ENCODE measurements at regions of chr14 and their contacts with region 1.

Region 1: GRCh38 chr14:91482263-91483013 is 27.7 kb downstream of the PPP4R3A start:
- DNase-seq: no peak
- ATAC-seq: peak; percentile 12
- H3K4me3 ChIP-seq: no peak overlapping the region
- H3K4me3 Mint-ChIP-seq: peak overlapping the region in 1 of 10 donors; percentile 8
- H3K27ac ChIP-seq: peak overlapping the region; percentile 14
- H3K27ac Mint-ChIP-seq: peak overlapping the region in 7 of 9 donors; percentile 34 to 76 (median 45)
- H3K4me1 ChIP-seq: peaks cover 4 to 10% of the 10 kb centered on the region in 2 donors
- H3K4me1 Mint-ChIP-seq: peaks cover 34 to 87% (median 82%) of the 10 kb centered on the region in 7 donors
- H3K27me3 ChIP-seq: no peaks in the 10 kb centered on the region
- H3K27me3 Mint-ChIP-seq: no peaks in the 10 kb centered on the region

Region 2: GRCh38 chr14:91470216-91470615 is 12.2 kb before region 1 on chr14:
- CTCF ChIA-PET with region 1: interaction called, 3 read pairs
- POLR2A ChIA-PET with region 1: no interaction called
- intact Hi-C with region 1: loop called in 1 of 2 experiments (anchors 2 kb)
- DNase-seq: no peak
- ATAC-seq: no peak
- H3K4me3 ChIP-seq: no peak overlapping the region
- H3K4me3 Mint-ChIP-seq: no peak overlapping the region
- H3K27ac ChIP-seq: peak overlapping the region; percentile 24
- H3K27ac Mint-ChIP-seq: peak overlapping the region in 4 of 9 donors; percentile 34 to 76 (median 56)
- H3K4me1 ChIP-seq: no peaks in the 10 kb centered on the region
- H3K4me1 Mint-ChIP-seq: peaks cover 2 to 29% (median 20%) of the 10 kb centered on the region in 7 donors
- H3K27me3 ChIP-seq: no peaks in the 10 kb centered on the region
- H3K27me3 Mint-ChIP-seq: no peaks in the 10 kb centered on the region

Region 3: GRCh38 chr14:91780452-91780851 is 298.0 kb after region 1 on chr14:
- CTCF ChIA-PET with region 1: no interaction called
- POLR2A ChIA-PET with region 1: no interaction called
- intact Hi-C with region 1: loop called in 1 of 2 experiments (anchors 10 kb)
- DNase-seq: no peak
- ATAC-seq: no peak
- H3K4me3 ChIP-seq: no peak overlapping the region
- H3K4me3 Mint-ChIP-seq: no peak overlapping the region
- H3K27ac ChIP-seq: no peak overlapping the region
- H3K27ac Mint-ChIP-seq: peak overlapping the region in 1 of 9 donors; percentile 27
- H3K4me1 ChIP-seq: no peaks in the 10 kb centered on the region
- H3K4me1 Mint-ChIP-seq: peaks cover 4 to 22% (median 10%) of the 10 kb centered on the region in 7 donors
- H3K27me3 ChIP-seq: no peaks in the 10 kb centered on the region
- H3K27me3 Mint-ChIP-seq: no peaks in the 10 kb centered on the region

Region 4: DNA sequence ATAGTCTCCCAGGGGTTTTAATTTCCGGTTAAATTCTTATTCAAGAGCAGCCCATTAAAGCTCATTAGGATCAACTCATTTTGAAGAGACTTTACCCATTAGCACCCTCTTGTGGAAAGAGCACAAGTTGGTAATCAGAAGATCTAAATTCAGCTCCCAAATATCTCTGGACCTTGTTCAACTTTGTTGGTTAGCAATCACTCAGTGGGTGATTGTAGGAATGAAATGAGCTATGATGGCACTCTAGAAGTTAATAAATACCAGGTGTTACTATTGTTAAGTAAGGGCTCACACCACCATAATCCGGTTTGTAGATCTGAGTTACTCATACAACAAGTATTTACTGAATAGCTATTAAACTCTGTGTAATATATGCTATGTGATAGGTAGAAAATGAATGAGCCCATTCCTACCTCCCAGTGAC is 514.5 kb after region 1 on chr14:
- CTCF ChIA-PET with region 1: no interaction called
- POLR2A ChIA-PET with region 1: no interaction called
- intact Hi-C with region 1: loop called in 1 of 2 experiments (anchors 10 kb)
- DNase-seq: peak in 7 of 9 donors; percentile 12 to 58 (median 44)
- ATAC-seq: peak; percentile 66
- H3K4me3 ChIP-seq: no peak overlapping the region
- H3K4me3 Mint-ChIP-seq: peak overlapping the region in 3 of 10 donors; percentile 37 to 70 (median 48)
- H3K27ac ChIP-seq: no peak overlapping the region
- H3K27ac Mint-ChIP-seq: peak overlapping the region in 5 of 9 donors; percentile 15 to 70 (median 65)
- H3K4me1 ChIP-seq: peaks cover 10 to 27% of the 10 kb centered on the region in 2 donors
- H3K4me1 Mint-ChIP-seq: peaks cover 27 to 54% (median 41%) of the 10 kb centered on the region in 7 donors
- H3K27me3 ChIP-seq: no peaks in the 10 kb centered on the region
- H3K27me3 Mint-ChIP-seq: no peaks in the 10 kb centered on the region

Measured in naive thymus-derived CD4-positive, alpha-beta T cell (primary cell).